CD8-positive, alpha-beta memory T cell (primary cell): ENCODE measurements at regions of chr6 and their contacts with region 1.

Region 1: GRCh38 chr6:39302669-39303424 is 11.4 kb downstream of the KCNK17 start:
- DNase-seq: peak; percentile 72 to 89 (median 73)
- H3K4me3 ChIP-seq: peak overlapping the region; percentile 40
- H3K4me3 Mint-ChIP-seq: peak overlapping the region in 6 of 7 donors; percentile 71 to 85 (median 76)
- H3K27ac ChIP-seq: no peak overlapping the region
- H3K27ac Mint-ChIP-seq: peak overlapping the region in 4 of 8 donors; percentile 11 to 91 (median 36)
- H3K4me1 ChIP-seq: peaks cover 6% of the 10 kb centered on the region
- H3K4me1 Mint-ChIP-seq: peaks cover 5 to 11% (median 5%) of the 10 kb centered on the region in 3 donors
- H3K27me3 ChIP-seq: no peaks in the 10 kb centered on the region
- H3K27me3 Mint-ChIP-seq: peaks cover 6 to 17% of the 10 kb centered on the region in 2 donors

Region 2: GRCh38 chr6:38871741-38872568 is 430.9 kb before region 1 on chr6:
- CTCF ChIA-PET with region 1: interaction called, 73 read pairs
- POLR2A ChIA-PET with region 1: interaction called, 3 read pairs
- DNase-seq: peak; percentile 18 to 67 (median 39)
- H3K4me3 ChIP-seq: no peak overlapping the region
- H3K4me3 Mint-ChIP-seq: no peak overlapping the region
- H3K27ac ChIP-seq: no peak overlapping the region
- H3K27ac Mint-ChIP-seq: peak overlapping the region in 1 of 8 donors; percentile 76
- H3K4me1 ChIP-seq: peaks cover 13% of the 10 kb centered on the region
- H3K4me1 Mint-ChIP-seq: peaks cover 14 to 34% (median 33%) of the 10 kb centered on the region in 3 donors
- H3K27me3 ChIP-seq: no peaks in the 10 kb centered on the region
- H3K27me3 Mint-ChIP-seq: peaks cover 0 to 6% of the 10 kb centered on the region in 2 donors

Region 3: DNA sequence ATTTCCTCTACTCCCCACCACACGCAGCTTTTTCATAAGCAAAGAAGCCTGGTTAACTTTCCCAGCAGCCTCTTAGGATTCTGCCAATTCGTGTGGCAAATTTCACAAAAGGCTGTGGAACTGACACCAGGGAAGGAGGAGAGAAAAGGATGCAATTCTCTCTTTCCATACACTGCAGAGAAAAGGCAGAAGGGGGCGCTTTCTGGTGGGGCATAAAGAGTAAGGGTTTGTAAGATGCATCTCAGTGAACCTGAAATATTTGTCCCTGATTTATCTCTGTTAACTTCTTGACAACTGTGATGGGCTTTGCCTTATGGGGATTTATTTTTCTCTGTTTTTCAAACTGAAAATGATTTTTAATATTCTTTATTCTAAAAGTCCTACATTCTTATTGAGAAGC is 299.8 kb before region 1 on chr6:
- CTCF ChIA-PET with region 1: interaction called, 10 read pairs
- POLR2A ChIA-PET with region 1: no interaction called
- DNase-seq: no peak
- H3K4me3 ChIP-seq: no peak overlapping the region
- H3K4me3 Mint-ChIP-seq: no peak overlapping the region
- H3K27ac ChIP-seq: no peak overlapping the region
- H3K27ac Mint-ChIP-seq: no peak overlapping the region
- H3K4me1 ChIP-seq: no peaks in the 10 kb centered on the region
- H3K4me1 Mint-ChIP-seq: no peaks in the 10 kb centered on the region
- H3K27me3 ChIP-seq: no peaks in the 10 kb centered on the region
- H3K27me3 Mint-ChIP-seq: peaks cover 8 to 69% of the 10 kb centered on the region in 2 donors

Region 4: DNA sequence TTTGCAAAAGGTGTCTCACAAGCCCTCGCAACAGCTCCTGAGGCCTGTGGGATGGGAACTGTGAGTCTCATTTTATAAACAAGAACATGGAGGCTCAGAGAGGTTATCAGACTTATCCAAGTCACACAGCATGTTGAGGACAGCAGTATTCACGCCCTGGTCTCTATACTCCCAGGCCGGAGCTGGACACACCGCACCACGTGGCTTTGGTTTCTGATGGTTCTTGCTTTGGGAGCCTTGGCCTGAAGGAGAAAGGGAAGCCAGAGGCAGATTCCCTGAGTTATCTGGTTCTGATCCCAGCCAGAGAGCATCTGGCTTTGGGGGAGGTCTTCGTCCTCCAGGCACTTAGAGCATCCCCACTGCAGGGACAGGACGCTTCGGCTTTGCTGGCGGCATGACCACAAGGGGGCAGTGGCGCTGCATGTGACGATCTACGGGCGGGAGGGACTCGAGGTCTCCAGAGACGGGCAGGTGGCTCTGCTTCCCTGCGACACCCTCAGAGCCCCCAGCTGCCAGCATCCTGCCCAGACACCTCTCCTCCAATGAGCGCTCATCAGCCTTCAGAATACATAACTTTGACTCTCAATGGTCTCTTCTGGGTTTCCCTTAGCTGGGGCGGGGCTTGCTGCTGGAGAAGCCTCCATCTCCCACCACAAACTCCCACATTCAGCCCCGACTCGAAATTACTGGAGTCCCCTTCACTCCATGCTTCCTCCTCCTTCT is 136.5 kb before region 1 on chr6:
- CTCF ChIA-PET with region 1: interaction called, 269 read pairs
- POLR2A ChIA-PET with region 1: interaction called, 4 read pairs
- DNase-seq: peak; percentile 60 to 86 (median 68)
- H3K4me3 ChIP-seq: no peak overlapping the region
- H3K4me3 Mint-ChIP-seq: no peak overlapping the region
- H3K27ac ChIP-seq: no peak overlapping the region
- H3K27ac Mint-ChIP-seq: peak overlapping the region in 1 of 8 donors; percentile 66
- H3K4me1 ChIP-seq: peaks cover 4% of the 10 kb centered on the region
- H3K4me1 Mint-ChIP-seq: peaks cover 2 to 6% (median 6%) of the 10 kb centered on the region in 3 donors
- H3K27me3 ChIP-seq: no peaks in the 10 kb centered on the region
- H3K27me3 Mint-ChIP-seq: peaks cover 0 to 3% of the 10 kb centered on the region in 2 donors

Region 5: DNA sequence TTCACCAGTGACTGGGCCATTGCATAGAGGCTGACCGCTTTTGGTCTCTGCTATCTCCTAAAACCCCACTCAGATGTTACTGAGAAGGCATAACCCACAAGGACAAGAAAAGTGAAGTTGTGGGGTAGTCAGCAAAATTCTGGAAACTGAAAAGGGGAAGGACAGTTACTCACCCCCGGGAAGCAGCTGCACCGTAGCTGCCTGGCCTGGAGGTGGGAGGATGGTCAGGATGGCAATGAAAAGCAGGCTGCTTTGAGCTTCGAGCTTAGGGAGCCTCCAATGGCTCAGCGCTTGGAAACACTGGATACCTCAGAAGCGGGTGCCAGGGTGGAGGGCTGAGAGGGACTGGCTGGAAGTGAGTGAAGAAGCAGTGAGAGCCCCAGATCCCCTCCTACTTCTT is 129.6 kb before region 1 on chr6:
- CTCF ChIA-PET with region 1: interaction called, 269 read pairs
- POLR2A ChIA-PET with region 1: no interaction called
- DNase-seq: no peak
- H3K4me3 ChIP-seq: no peak overlapping the region
- H3K4me3 Mint-ChIP-seq: no peak overlapping the region
- H3K27ac ChIP-seq: no peak overlapping the region
- H3K27ac Mint-ChIP-seq: no peak overlapping the region
- H3K4me1 ChIP-seq: no peaks in the 10 kb centered on the region
- H3K4me1 Mint-ChIP-seq: no peaks in the 10 kb centered on the region
- H3K27me3 ChIP-seq: no peaks in the 10 kb centered on the region
- H3K27me3 Mint-ChIP-seq: peaks cover 0 to 1% of the 10 kb centered on the region in 2 donors

Region 6: GRCh38 chr6:39189915-39190544 is 112.8 kb before region 1 on chr6:
- CTCF ChIA-PET with region 1: interaction called, 15 read pairs
- POLR2A ChIA-PET with region 1: no interaction called
- DNase-seq: peak in 1 of 5 donors; percentile 46
- H3K4me3 ChIP-seq: no peak overlapping the region
- H3K4me3 Mint-ChIP-seq: no peak overlapping the region
- H3K27ac ChIP-seq: no peak overlapping the region
- H3K27ac Mint-ChIP-seq: peak overlapping the region in 1 of 8 donors; percentile 26
- H3K4me1 ChIP-seq: no peaks in the 10 kb centered on the region
- H3K4me1 Mint-ChIP-seq: peaks cover 4 to 5% (median 5%) of the 10 kb centered on the region in 3 donors
- H3K27me3 ChIP-seq: no peaks in the 10 kb centered on the region
- H3K27me3 Mint-ChIP-seq: peaks cover 0 to 2% of the 10 kb centered on the region in 2 donors

Region 7: DNA sequence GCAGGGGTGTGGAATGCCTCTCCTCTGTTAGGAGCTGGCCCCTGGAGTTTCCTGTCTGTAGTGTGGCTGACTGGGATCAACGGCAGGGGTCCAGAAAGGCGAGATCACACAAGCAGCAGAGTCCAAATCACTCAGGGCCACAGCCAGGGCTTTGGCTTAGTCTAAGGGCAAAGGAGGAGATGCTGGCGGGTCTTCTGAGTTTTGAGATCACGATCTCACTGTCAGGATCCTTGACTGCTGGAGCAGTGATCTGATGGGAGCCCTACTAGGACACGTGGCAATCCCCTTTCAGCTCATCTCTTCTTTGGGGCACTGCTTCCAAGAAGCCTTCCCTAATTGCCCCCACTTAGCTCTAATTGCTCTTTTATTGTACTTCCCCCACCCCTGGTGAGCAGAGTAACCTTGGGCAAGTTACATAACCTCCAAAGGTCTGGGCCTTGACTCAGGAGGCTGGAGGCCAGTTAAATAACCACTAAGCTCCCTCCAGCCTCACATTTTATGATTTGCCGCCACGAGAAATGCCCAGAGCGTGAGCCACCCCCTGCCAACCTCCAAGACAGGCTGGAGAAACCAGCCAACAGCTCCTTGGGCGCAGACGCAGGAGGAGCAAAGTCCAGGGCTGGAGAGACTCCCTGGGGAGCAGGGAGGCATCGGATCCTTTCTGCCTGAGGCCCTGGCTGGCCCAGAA is 85.5 kb before region 1 on chr6:
- CTCF ChIA-PET with region 1: interaction called, 10 read pairs
- POLR2A ChIA-PET with region 1: no interaction called
- DNase-seq: no peak
- H3K4me3 ChIP-seq: no peak overlapping the region
- H3K4me3 Mint-ChIP-seq: peak overlapping the region in 1 of 7 donors; percentile 36
- H3K27ac ChIP-seq: no peak overlapping the region
- H3K27ac Mint-ChIP-seq: peak overlapping the region in 1 of 8 donors; percentile 42
- H3K4me1 ChIP-seq: peaks cover 4% of the 10 kb centered on the region
- H3K4me1 Mint-ChIP-seq: peaks cover 18 to 45% (median 27%) of the 10 kb centered on the region in 3 donors
- H3K27me3 ChIP-seq: no peaks in the 10 kb centered on the region
- H3K27me3 Mint-ChIP-seq: peaks cover 0 to 2% of the 10 kb centered on the region in 2 donors

Region 8: DNA sequence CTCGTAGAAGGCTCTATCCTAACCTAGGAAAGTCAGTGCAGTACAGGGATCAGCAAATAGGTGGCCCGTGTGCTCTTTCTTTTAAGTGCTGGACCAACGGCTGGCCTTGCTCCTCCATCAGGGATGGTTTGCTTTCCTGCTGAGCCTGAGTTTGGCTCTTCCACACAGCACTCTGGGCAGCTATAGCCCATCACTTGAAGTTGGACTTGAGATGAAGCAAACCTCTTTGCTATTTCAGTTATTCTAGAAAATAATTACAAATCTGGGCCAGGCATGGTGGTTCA is 86.6 kb after region 1 on chr6:
- CTCF ChIA-PET with region 1: no interaction called
- POLR2A ChIA-PET with region 1: no interaction called
- DNase-seq: no peak
- H3K4me3 ChIP-seq: no peak overlapping the region
- H3K4me3 Mint-ChIP-seq: no peak overlapping the region
- H3K27ac ChIP-seq: no peak overlapping the region
- H3K27ac Mint-ChIP-seq: no peak overlapping the region
- H3K4me1 ChIP-seq: no peaks in the 10 kb centered on the region
- H3K4me1 Mint-ChIP-seq: no peaks in the 10 kb centered on the region
- H3K27me3 ChIP-seq: no peaks in the 10 kb centered on the region
- H3K27me3 Mint-ChIP-seq: peaks cover 9 to 32% of the 10 kb centered on the region in 2 donors